Esophagus muscularis mucosa (tissue), 4 donors: ENCODE measurements at regions of chr3 and their contacts with region 1.

Region 1: DNA sequence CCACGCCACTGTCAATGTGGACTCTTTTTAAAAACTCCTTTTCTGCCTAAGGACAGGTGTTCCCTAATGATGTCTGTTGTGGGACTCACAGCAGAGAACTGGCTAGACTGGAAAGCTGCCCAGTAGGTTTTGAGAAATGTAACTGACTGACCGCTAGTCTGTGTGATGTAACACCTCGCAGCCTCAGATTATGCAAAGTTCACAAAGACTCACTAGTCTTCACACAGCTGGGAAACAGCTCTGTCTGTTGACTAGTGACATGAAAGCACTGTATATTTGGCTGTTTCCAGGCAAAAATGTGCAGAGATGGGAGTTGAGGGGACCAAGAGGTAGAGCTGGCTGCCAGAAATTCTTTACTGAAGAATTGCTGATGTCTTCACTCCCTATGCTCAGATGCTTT is 10.3 kb downstream of the PDZRN3 start:
- DNase-seq: no peak
- H3K4me3 ChIP-seq: peak overlapping the region in 1 of 4 donors; percentile 27
- H3K27ac ChIP-seq: peak overlapping the region; percentile 80 to 95 (median 89)
- H3K4me1 ChIP-seq: peaks cover 66 to 100% (median 99%) of the 10 kb centered on the region in 4 donors
- H3K27me3 ChIP-seq: no peaks in the 10 kb centered on the region
- CTCF ChIP-seq: peak in 1 of 3 experiments; percentile 17
- EP300 ChIP-seq: no peak
- POLR2A ChIP-seq: no peak

Region 2: GRCh38 chr3:73270839-73271483 is 343.4 kb before region 1 on chr3:
- intact Hi-C with region 1: no loop called
- DNase-seq: no peak
- H3K4me3 ChIP-seq: no peak overlapping the region
- H3K27ac ChIP-seq: no peak overlapping the region
- H3K4me1 ChIP-seq: no peaks in the 10 kb centered on the region
- H3K27me3 ChIP-seq: no peaks in the 10 kb centered on the region
- CTCF ChIP-seq: no peak
- EP300 ChIP-seq: no peak
- POLR2A ChIP-seq: no peak

Region 3: GRCh38 chr3:73422571-73422970 is 191.8 kb before region 1 on chr3:
- intact Hi-C with region 1: loop called (anchors 10 kb)
- DNase-seq: no peak
- H3K4me3 ChIP-seq: peak overlapping the region in 3 of 4 donors; percentile 3 to 10 (median 6)
- H3K27ac ChIP-seq: peak overlapping the region; percentile 65 to 82 (median 76)
- H3K4me1 ChIP-seq: peaks cover 49 to 97% (median 79%) of the 10 kb centered on the region in 4 donors
- H3K27me3 ChIP-seq: no peaks in the 10 kb centered on the region
- CTCF ChIP-seq: no peak
- EP300 ChIP-seq: peak; percentile 14
- POLR2A ChIP-seq: no peak

Region 4: DNA sequence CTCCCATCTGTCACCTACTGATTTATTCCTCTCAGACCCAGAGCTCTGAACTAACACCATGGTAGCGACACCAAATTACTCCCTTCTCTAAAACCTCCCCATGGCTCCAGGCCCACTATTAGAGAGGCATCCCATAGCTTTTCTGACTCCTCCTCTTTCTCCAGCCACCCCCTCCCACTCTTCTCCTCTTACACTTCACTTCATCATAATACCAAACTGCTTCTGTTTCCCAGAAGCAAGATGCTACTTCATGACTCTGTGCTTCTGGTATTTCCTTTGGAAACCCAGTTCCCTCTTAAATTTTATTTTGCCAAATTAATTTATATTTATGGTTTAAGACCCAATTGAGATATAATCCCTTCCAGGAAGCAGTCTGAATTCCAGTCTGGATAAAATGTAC is 475.4 kb after region 1 on chr3:
- intact Hi-C with region 1: no loop called
- DNase-seq: no peak
- H3K4me3 ChIP-seq: no peak overlapping the region
- H3K27ac ChIP-seq: no peak overlapping the region
- H3K4me1 ChIP-seq: no peaks in the 10 kb centered on the region
- H3K27me3 ChIP-seq: no peaks in the 10 kb centered on the region
- CTCF ChIP-seq: no peak
- EP300 ChIP-seq: no peak
- POLR2A ChIP-seq: no peak